Spleen (tissue), 13 donors: ENCODE measurements at regions of chr2 and their contacts with region 1.

Region 1: GRCh38 chr2:234135720-234136221 is 85.3 kb downstream of the SPP2 start:
- DNase-seq: peak; percentile 86
- H3K4me3 ChIP-seq: no peak overlapping the region
- H3K27ac ChIP-seq: peak overlapping the region in 1 of 8 donors; percentile 10
- H3K4me1 ChIP-seq: peaks cover 3 to 28% (median 9%) of the 10 kb centered on the region in 6 donors
- H3K27me3 ChIP-seq: peaks cover 0 to 17% (median 0%) of the 10 kb centered on the region in 7 donors
- CTCF ChIP-seq: peak; percentile 58 to 88 (median 80)
- POLR2A ChIP-seq: no peak

Region 2: GRCh38 chr2:234288974-234289455 is 153.2 kb after region 1 on chr2:
- intact Hi-C with region 1: loop called (anchors 10 kb)
- DNase-seq: peak; percentile 84
- H3K4me3 ChIP-seq: no peak overlapping the region
- H3K27ac ChIP-seq: peak overlapping the region in 7 of 8 donors; percentile 73 to 93 (median 83)
- H3K4me1 ChIP-seq: peaks cover 37 to 57% (median 53%) of the 10 kb centered on the region in 6 donors
- H3K27me3 ChIP-seq: peaks cover 0 to 9% (median 0%) of the 10 kb centered on the region in 7 donors
- CTCF ChIP-seq: peak; percentile 68 to 89 (median 86)
- POLR2A ChIP-seq: no peak